ENCODE measurements at regions of chr17 and their contacts with region 1.

Region 1: DNA sequence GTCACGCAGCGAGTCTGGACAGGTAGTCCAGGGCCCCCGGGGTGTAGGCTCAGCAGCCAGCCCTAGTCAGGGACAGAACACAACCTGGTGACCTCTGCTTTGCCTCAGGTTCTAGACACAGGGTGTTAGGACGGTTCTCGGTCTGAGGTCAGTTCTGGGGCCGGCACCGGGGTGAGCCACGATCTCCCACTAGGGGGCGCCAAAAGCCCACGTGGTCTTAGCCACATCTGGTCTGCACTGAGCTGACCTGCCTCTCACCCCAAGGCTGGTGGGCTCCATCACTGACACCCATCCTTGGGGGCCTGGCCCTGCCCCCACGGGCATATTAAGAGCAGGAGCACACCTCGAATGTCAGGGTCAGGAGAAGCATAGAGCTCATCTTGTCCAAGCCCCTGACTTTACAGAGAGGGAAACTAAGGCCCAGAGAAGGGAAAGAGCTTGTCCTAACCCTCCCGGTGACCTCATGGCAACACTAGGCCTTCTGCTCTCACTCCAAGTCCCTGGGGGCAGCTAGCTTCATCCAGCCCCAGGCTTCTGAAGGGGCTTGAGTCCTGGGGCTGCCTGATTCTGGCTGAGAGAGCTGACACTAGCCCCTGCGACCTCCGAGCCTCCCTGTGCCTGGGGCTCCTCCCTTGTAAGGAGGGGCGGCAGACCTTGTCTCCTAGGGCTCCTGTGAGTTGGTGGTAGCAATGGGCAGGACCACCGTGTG is 9.0 kb downstream of the SLC5A10 start:
- DNase-seq: peak; percentile 73
- H3K4me3 Mint-ChIP-seq: no peak overlapping the region
- H3K27ac Mint-ChIP-seq: no peak overlapping the region
- H3K4me1 Mint-ChIP-seq: peaks cover 5% of the 10 kb centered on the region
- H3K27me3 Mint-ChIP-seq: no peaks in the 10 kb centered on the region
- CTCF ChIP-seq: peak; percentile 94

Region 2: DNA sequence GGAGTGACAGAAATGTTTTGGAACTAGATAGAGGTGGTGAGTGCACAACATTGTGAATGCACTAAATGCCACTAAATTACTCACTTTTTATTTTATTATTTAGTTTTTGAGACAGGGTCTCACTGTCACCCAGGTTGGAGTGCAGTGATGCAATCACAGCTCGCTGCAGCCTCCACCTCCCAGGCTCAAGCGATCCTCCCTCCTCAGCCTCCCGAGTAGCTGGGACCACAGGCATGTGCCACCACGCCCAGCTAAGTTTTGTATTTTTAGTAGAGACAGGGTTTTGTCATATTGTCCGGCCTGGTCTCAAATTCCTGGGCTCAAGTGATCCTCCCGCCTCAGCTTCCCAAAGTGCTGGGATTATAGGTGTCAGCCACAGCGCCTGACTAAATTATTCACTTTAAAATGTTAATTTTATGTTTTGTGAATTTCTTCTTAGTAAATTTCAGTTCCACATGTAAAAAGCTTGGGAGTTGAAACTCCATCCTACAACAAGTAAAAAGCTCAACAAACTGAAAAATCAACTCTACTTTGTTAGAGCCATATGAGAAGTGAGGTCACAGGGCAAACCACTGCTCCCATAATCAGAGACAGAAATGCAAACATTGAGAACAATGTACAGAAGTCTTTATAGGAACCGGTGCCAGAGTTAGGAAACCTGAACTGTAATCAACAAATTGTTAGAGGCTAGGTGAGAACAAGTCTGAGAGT is 22.8 kb before region 1 on chr17:
- CTCF ChIA-PET with region 1: interaction called, 18 read pairs
- POLR2A ChIA-PET with region 1: interaction called, 3 read pairs
- intact Hi-C with region 1: no loop called
- DNase-seq: no peak
- H3K4me3 Mint-ChIP-seq: no peak overlapping the region
- H3K27ac Mint-ChIP-seq: no peak overlapping the region
- H3K4me1 Mint-ChIP-seq: no peaks in the 10 kb centered on the region
- H3K27me3 Mint-ChIP-seq: peaks cover 29% of the 10 kb centered on the region
- CTCF ChIP-seq: no peak

Region 3: GRCh38 chr17:18944646-18945045 is 16.3 kb before region 1 on chr17:
- CTCF ChIA-PET with region 1: interaction called, 18 read pairs
- POLR2A ChIA-PET with region 1: interaction called, 3 read pairs
- intact Hi-C with region 1: no loop called
- DNase-seq: no peak
- H3K4me3 Mint-ChIP-seq: no peak overlapping the region
- H3K27ac Mint-ChIP-seq: no peak overlapping the region
- H3K4me1 Mint-ChIP-seq: no peaks in the 10 kb centered on the region
- H3K27me3 Mint-ChIP-seq: peaks cover 74% of the 10 kb centered on the region
- CTCF ChIP-seq: no peak

Region 4: DNA sequence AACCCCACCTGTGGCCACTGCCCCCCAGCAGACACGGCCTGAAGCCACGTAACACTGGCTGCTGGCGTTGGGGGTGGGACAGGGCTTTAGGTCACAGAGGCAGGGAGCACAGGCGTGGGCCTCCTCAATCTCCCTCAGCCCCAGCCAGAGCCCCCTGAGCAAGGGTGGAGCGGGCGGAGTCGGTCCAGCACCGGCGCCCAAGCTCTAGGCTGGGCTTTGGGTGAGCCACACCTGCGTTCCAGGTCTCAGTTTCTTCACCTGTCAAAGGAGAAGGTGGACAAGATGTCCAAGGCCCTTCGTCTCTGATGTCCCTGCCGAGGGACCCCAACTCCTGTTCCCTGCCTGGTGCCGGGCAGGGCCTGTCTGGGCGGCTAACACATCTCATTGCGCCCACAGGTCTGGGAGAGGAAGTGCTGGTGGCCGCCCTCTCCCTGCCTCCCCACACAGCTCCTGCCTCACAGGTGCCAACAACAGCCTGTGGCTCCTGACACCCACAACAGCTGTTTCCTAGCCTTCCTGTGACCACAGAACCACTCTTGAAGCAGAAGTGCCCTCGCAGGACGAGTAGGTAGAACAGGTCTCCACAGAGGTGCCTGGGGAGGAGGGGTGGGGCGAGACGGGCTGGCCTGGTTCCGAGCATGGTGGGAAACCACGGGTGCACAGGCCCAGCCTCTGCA is 31.6 kb after region 1 on chr17:
- CTCF ChIA-PET with region 1: interaction called, 10 read pairs
- POLR2A ChIA-PET with region 1: no interaction called
- intact Hi-C with region 1: no loop called
- DNase-seq: no peak
- H3K4me3 Mint-ChIP-seq: no peak overlapping the region
- H3K27ac Mint-ChIP-seq: no peak overlapping the region
- H3K4me1 Mint-ChIP-seq: no peaks in the 10 kb centered on the region
- H3K27me3 Mint-ChIP-seq: no peaks in the 10 kb centered on the region
- CTCF ChIP-seq: no peak

Region 5: GRCh38 chr17:19004421-19005136 is 43.6 kb after region 1 on chr17 and contains the start of gene FAM83G:
- CTCF ChIA-PET with region 1: interaction called, 24 read pairs
- POLR2A ChIA-PET with region 1: interaction called, 8 read pairs
- intact Hi-C with region 1: no loop called
- DNase-seq: peak; percentile 87
- H3K4me3 Mint-ChIP-seq: peak within 1 kb of the TSS; percentile 82
- H3K27ac Mint-ChIP-seq: peak within 1 kb of the TSS; percentile 79
- H3K4me1 Mint-ChIP-seq: peaks cover 11% of the 10 kb centered on the region
- H3K27me3 Mint-ChIP-seq: no peaks in the 10 kb centered on the region
- CTCF ChIP-seq: no peak
- total RNA-seq, gene FAM83G: 47.7 and 50.1 TPM in 2 replicates

Region 6: DNA sequence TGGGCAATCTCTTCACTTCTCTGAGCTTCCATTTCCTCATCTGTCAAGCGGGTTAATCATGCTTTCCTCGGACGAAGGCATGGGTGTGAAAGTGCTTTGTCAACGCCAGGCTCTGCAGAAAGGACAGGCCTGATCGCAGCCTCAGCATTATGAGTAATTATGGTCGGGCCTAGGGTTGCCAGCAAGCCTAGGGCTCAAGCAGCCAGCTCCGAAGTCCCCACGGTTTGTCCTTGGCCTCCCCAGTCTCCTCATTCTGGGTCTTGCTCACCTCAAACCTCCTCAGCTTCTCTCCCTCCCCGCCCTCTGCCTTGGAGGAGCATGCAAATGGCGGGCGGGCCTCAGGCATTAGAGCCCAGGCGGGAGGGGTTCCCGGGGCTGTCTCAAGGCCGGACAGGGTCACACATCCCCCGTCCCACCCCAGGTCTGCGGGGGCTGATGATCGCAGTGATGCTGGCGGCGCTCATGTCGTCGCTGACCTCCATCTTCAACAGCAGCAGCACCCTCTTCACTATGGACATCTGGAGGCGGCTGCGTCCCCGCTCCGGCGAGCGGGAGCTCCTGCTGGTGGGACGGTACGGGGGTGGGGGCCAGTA is 53.8 kb after region 1 on chr17:
- CTCF ChIA-PET with region 1: interaction called, 13 read pairs
- POLR2A ChIA-PET with region 1: no interaction called
- intact Hi-C with region 1: no loop called
- DNase-seq: no peak
- H3K4me3 Mint-ChIP-seq: no peak overlapping the region
- H3K27ac Mint-ChIP-seq: no peak overlapping the region
- H3K4me1 Mint-ChIP-seq: peaks cover 28% of the 10 kb centered on the region
- H3K27me3 Mint-ChIP-seq: no peaks in the 10 kb centered on the region
- CTCF ChIP-seq: no peak

Region 7: GRCh38 chr17:19024101-19025078 is 63.4 kb after region 1 on chr17:
- CTCF ChIA-PET with region 1: interaction called, 22 read pairs
- POLR2A ChIA-PET with region 1: no interaction called
- intact Hi-C with region 1: no loop called
- DNase-seq: peak; percentile 30
- H3K4me3 Mint-ChIP-seq: no peak overlapping the region
- H3K27ac Mint-ChIP-seq: no peak overlapping the region
- H3K4me1 Mint-ChIP-seq: no peaks in the 10 kb centered on the region
- H3K27me3 Mint-ChIP-seq: no peaks in the 10 kb centered on the region
- CTCF ChIP-seq: no peak

Region 8: GRCh38 chr17:19424934-19425868 is 464.2 kb after region 1 on chr17:
- CTCF ChIA-PET with region 1: no interaction called
- POLR2A ChIA-PET with region 1: no interaction called
- intact Hi-C with region 1: no loop called
- DNase-seq: no peak
- H3K4me3 Mint-ChIP-seq: no peak overlapping the region
- H3K27ac Mint-ChIP-seq: no peak overlapping the region
- H3K4me1 Mint-ChIP-seq: no peaks in the 10 kb centered on the region
- H3K27me3 Mint-ChIP-seq: no peaks in the 10 kb centered on the region
- CTCF ChIP-seq: no peak

Measured in MCF 10A (cell line).